Naive thymus-derived CD4-positive, alpha-beta T cell (primary cell): ENCODE measurements at regions of chr15 and their contacts with region 1.

Region 1: DNA sequence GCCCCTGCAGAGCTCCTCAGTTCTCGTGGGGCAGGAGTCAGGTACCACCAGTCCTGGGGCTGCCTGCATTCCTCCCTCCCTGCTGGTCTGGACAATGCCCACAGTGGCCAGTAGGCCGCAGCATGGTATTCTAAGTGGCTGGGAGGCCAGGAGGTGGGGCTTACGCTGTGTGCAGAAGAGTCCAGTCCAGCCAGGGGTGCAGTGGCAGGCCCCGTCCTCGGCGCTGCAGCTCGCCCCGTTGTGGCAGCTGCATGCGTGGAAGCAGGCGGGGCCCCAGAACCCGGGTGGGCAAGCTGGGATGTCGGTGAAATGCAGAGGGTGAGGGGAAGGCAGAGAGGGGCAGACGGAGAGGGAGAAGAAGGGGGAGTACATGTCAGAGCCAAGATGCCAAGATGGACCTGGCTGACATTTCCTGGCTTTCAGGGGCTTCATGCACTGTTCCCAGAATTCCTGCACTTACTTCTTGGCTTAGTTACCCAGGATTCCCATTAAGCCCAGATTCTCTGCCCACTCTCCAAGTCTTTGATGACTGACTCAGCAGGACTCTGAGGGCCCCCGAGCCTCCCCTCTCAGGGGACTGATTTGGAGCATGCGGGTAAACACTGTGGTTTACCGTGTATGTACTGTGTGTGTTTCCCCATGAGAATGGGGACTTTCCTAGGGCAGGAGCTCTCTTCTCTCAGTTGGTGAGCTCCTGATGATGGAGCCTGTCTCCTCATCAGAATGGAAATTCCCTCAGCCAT is 47.5 kb downstream of the RAB11A start:
- DNase-seq: peak in 2 of 9 donors; percentile 16 to 63
- ATAC-seq: peak; percentile 80
- H3K4me3 ChIP-seq: no peak overlapping the region
- H3K4me3 Mint-ChIP-seq: peak overlapping the region in 1 of 10 donors; percentile 46
- H3K27ac ChIP-seq: no peak overlapping the region
- H3K27ac Mint-ChIP-seq: peak overlapping the region in 4 of 9 donors; percentile 0 to 86 (median 20)
- H3K4me1 ChIP-seq: no peaks in the 10 kb centered on the region
- H3K4me1 Mint-ChIP-seq: peaks cover 0 to 44% (median 6%) of the 10 kb centered on the region in 7 donors
- H3K27me3 ChIP-seq: no peaks in the 10 kb centered on the region
- H3K27me3 Mint-ChIP-seq: no peaks in the 10 kb centered on the region

Region 2: DNA sequence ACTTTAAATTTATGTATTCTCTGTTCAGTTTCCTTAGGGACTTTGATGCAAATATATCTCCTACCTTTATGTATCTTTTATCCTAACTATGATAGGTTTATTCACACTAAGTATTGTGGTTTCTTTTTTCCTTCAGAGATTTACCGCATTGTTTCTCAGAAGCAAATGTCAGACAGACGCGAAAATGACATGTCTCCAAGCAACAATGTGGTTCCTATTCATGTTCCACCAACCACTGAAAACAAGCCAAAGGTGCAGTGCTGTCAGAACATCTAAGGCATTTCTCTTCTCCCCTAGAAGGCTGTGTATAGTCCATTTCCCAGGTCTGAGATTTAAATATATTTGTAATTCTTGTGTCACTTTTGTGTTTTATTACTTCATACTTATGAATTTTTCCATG is 29.3 kb before region 1 on chr15:
- CTCF ChIA-PET with region 1: no interaction called
- POLR2A ChIA-PET with region 1: no interaction called
- intact Hi-C with region 1: loop called in 1 of 2 experiments (anchors 1 kb)
- DNase-seq: peak in 8 of 9 donors; percentile 41 to 89 (median 82)
- ATAC-seq: peak; percentile 93
- H3K4me3 ChIP-seq: no peak overlapping the region
- H3K4me3 Mint-ChIP-seq: peak overlapping the region; percentile 26 to 82 (median 58)
- H3K27ac ChIP-seq: peak overlapping the region; percentile 71
- H3K27ac Mint-ChIP-seq: peak overlapping the region; percentile 84 to 99 (median 96)
- H3K4me1 ChIP-seq: peaks cover 15 to 52% of the 10 kb centered on the region in 2 donors
- H3K4me1 Mint-ChIP-seq: peaks cover 35 to 92% (median 77%) of the 10 kb centered on the region in 7 donors
- H3K27me3 ChIP-seq: no peaks in the 10 kb centered on the region
- H3K27me3 Mint-ChIP-seq: no peaks in the 10 kb centered on the region